Naive thymus-derived CD8-positive, alpha-beta T cell (primary cell): ENCODE measurements at regions of chr19 and their contacts with region 1.

Region 1: GRCh38 chr19:1269065-1269477 is at the start of gene CIRBP:
- DNase-seq: peak; percentile 97 to 100 (median 99)
- ATAC-seq: peak; percentile 76 to 84
- H3K4me3 Mint-ChIP-seq: peak within 1 kb of the TSS; percentile 82 to 93 (median 89)
- H3K27ac Mint-ChIP-seq: peak within 1 kb of the TSS; percentile 83 to 97 (median 94)
- H3K4me1 Mint-ChIP-seq: peaks cover 40 to 82% (median 77%) of the 10 kb centered on the region in 4 donors
- H3K27me3 Mint-ChIP-seq: no peaks in the 10 kb centered on the region
- polyA plus RNA-seq, gene CIRBP: 204 to 273 (median 262) TPM

Region 2: GRCh38 chr19:860481-861101 is 408.5 kb before region 1 on chr19:
- POLR2A ChIA-PET with region 1: interaction called, 10 read pairs
- DNase-seq: peak in 9 of 10 donors; percentile 39 to 74 (median 59)
- ATAC-seq: peak; percentile 56 to 59
- H3K4me3 Mint-ChIP-seq: peak overlapping the region in 6 of 10 donors; percentile 28 to 60 (median 49)
- H3K27ac Mint-ChIP-seq: no peak overlapping the region
- H3K4me1 Mint-ChIP-seq: peaks cover 7 to 28% (median 17%) of the 10 kb centered on the region in 4 donors
- H3K27me3 Mint-ChIP-seq: peaks cover 0 to 11% (median 0%) of the 10 kb centered on the region in 5 donors

Region 3: DNA sequence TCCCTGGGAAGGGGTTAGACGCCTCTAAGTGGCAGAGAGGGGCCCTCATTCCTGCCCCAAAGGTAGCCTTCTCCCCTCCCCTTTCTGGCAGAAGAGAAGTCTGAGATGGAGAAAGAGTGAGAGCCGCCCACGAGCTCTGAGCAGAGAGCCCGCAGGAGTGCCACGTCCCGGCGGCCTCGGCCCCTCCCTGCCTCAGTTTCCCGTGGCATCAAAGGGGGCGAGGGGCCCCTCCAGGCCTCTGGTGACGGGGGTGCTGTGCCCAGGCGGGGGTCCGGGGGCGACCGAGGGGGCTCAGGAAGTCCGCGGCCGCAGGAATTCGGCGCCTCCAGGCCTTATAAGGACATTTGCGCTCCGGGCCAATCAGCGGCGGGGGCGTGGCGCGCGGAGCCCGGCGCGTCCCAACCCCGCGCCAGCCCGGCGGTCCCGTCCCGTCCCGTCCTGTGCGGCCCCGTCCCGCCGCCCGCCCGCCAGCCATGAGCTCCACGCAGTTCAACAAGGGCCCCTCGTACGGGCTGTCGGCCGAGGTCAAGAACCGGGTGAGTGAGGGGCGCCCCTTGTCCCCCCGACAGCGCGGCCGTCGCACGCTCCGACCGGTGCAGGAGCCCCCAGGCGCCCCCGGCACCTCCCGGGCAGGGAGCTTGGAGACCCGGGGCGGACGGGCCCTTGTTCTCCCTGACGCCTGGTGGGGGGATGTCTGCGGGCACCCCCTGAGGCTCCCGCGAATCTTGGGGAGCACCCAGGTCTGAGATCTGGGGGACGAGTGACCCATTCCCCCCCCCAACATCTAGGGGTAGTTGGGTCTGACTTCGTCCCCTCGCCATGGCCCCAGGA is 242.7 kb before region 1 on chr19 and contains the start of gene CNN2:
- POLR2A ChIA-PET with region 1: interaction called, 36 read pairs
- DNase-seq: peak in 8 of 10 donors; percentile 46 to 71 (median 56)
- ATAC-seq: peak; percentile 13 to 34
- H3K4me3 Mint-ChIP-seq: peak within 1 kb of the TSS; percentile 94 to 99 (median 98)
- H3K27ac Mint-ChIP-seq: peak within 1 kb of the TSS; percentile 89 to 98 (median 96)
- H3K4me1 Mint-ChIP-seq: peaks cover 13 to 35% (median 27%) of the 10 kb centered on the region in 4 donors
- H3K27me3 Mint-ChIP-seq: peaks cover 0 to 2% (median 0%) of the 10 kb centered on the region in 5 donors
- polyA plus RNA-seq, gene CNN2: 498 to 693 (median 515) TPM

Region 4: GRCh38 chr19:1087813-1088415 is 181.2 kb before region 1 on chr19:
- POLR2A ChIA-PET with region 1: interaction called, 11 read pairs
- DNase-seq: peak in 8 of 10 donors; percentile 31 to 79 (median 62)
- ATAC-seq: peak; percentile 26 to 34
- H3K4me3 Mint-ChIP-seq: peak overlapping the region; percentile 54 to 79 (median 74)
- H3K27ac Mint-ChIP-seq: peak overlapping the region; percentile 86 to 98 (median 95)
- H3K4me1 Mint-ChIP-seq: peaks cover 22 to 70% (median 62%) of the 10 kb centered on the region in 4 donors
- H3K27me3 Mint-ChIP-seq: no peaks in the 10 kb centered on the region

Region 5: GRCh38 chr19:1205114-1206062 is 63.7 kb before region 1 on chr19 and contains the start of gene STK11:
- POLR2A ChIA-PET with region 1: interaction called, 10 read pairs
- DNase-seq: peak; percentile 98 to 100 (median 99)
- ATAC-seq: peak; percentile 91 to 95
- H3K4me3 Mint-ChIP-seq: peak within 1 kb of the TSS; percentile 91 to 98 (median 94)
- H3K27ac Mint-ChIP-seq: peak within 1 kb of the TSS in 9 of 10 donors; percentile 84 to 96 (median 93)
- H3K4me1 Mint-ChIP-seq: peaks cover 19 to 47% (median 40%) of the 10 kb centered on the region in 4 donors
- H3K27me3 Mint-ChIP-seq: no peaks in the 10 kb centered on the region
- polyA plus RNA-seq, gene STK11: 12.3 to 43.9 (median 20.3) TPM

Region 6: DNA sequence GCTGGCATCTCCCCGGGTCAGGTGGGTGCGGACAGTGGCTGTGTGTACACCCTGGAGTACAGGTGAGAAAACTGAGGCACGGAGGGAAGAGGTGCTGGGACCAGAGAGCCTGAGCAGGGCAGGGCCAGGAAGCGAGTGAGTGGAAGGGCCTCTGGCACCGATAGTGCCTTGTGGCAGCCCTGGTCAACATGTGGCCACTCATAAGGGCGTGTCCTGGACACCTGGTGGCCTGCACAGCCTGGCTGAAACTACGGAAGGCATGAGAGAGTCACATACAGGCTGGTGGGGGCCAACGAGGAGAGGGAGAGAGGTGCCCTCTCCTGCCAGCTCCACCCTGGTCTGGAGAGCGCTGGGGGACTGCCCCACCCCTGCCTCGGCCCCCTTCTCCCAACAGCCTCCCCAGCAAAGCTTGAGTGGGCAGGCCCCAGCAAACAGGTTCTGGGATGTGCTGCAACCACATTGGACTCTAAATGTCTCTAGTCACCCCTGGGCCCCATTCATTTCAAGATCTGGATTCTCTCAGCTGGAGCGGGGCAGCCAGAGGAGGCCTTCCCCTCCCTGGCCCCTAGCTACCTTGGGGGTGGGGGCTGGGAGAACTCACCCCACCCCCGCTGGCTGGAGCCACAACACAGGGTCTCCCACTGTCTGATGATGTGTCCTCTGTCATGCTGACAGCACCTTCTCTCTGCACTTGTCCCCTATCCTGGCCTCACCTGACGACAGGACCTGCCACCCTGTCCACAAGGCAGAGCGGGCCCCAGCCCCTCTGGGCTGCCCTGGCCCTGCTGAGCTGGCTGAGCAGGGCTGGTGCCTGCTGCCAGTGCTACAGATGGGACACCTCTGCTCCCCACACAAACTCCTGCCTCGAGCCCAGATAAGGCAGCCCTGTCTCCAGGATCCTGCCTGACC is 37.1 kb before region 1 on chr19:
- POLR2A ChIA-PET with region 1: no interaction called
- DNase-seq: no peak
- ATAC-seq: no peak
- H3K4me3 Mint-ChIP-seq: no peak overlapping the region
- H3K27ac Mint-ChIP-seq: peak overlapping the region in 6 of 10 donors; percentile 4 to 68 (median 40)
- H3K4me1 Mint-ChIP-seq: no peaks in the 10 kb centered on the region
- H3K27me3 Mint-ChIP-seq: peaks cover 0 to 1% (median 0%) of the 10 kb centered on the region in 5 donors

Region 7: GRCh38 chr19:1383311-1384084 is 114.4 kb after region 1 on chr19 and contains the start of gene NDUFS7:
- POLR2A ChIA-PET with region 1: interaction called, 15 read pairs
- DNase-seq: peak; percentile 87 to 100 (median 94)
- ATAC-seq: peak; percentile 87 to 89
- H3K4me3 Mint-ChIP-seq: peak within 1 kb of the TSS; percentile 85 to 98 (median 94)
- H3K27ac Mint-ChIP-seq: peak within 1 kb of the TSS; percentile 94 to 100 (median 97)
- H3K4me1 Mint-ChIP-seq: peaks cover 19 to 32% (median 26%) of the 10 kb centered on the region in 4 donors
- H3K27me3 Mint-ChIP-seq: peaks cover 0 to 5% (median 2%) of the 10 kb centered on the region in 5 donors
- polyA plus RNA-seq, gene NDUFS7: 211 to 233 (median 215) TPM